ENCODE measurements at regions of chr13 and their contacts with region 1.

Region 1: DNA sequence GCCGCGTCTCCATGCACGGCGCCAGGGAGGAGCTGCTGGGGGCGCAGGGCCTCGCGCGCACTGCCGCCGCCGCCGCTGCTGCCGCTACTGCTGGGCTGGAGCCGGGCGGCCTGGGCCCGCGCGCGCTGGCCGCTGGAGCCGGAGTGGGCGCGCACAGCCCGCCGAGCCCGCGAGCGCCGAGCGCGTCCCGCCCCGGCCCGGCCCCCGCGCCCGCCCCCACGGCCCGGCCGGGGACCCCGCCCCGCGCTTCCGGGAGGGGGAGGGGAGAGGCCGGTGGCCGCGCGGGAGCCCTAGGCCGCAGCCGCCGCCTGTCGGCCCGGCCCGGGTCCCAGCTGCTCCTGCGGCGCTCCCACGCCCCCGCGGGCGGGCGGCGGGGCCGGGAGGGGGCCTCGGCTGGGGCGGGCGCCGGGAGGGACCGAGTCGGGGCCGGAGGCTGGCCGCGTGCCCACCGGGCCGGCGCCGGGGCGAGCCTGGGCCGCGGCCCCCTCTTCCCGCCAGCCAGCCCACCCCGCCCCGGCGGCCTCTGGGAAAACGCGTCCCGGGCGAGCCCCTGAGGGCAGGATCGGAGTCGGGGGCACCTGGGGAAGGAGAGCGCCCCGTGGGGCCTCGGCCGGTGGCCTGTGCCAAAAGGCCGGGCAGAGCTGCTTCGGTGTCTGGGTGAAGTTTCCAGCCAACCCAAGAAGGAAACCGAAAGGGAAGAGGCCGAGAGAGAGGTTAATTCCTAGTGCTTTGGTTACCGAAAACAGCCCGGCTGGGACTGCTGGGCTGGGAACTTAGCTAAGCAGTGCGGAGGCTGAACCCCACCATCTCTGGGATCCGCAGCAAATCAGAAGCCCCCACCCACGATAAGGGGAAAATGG is at the start of gene STK24:
- DNase-seq: peak; percentile 82
- ATAC-seq: peak; percentile 78
- H3K4me3 Mint-ChIP-seq: peak within 1 kb of the TSS; percentile 88
- H3K27ac Mint-ChIP-seq: peak within 1 kb of the TSS; percentile 91
- H3K4me1 Mint-ChIP-seq: peaks cover 45% of the 10 kb centered on the region
- H3K27me3 Mint-ChIP-seq: no peaks in the 10 kb centered on the region
- CTCF ChIP-seq: no peak
- total RNA-seq, gene STK24: 74.8 and 84.8 TPM in 2 replicates

Region 2: DNA sequence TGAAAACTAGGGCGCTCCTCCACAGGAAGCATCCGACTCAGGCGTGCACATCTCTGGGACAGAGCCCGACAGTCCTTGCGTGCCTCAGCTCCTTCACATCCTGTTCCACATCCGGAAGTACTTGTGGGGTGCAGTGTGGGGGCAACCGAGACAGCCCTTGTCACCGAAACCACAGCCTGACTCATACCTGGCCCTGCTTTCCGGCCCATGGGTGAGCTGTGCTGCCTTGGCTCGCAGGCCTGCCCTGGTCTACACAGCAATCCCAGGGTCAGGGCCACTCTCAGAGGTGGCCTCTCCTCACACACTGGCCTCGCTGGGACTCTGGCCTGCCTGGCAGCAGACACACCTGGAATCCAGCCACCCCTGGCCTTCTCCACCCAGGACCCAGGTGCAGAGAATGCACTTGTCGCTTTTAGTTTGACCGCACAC is 100.6 kb before region 1 on chr13:
- CTCF ChIA-PET with region 1: no interaction called
- POLR2A ChIA-PET with region 1: interaction called, 22 read pairs
- intact Hi-C with region 1: loop called (anchors 1 kb)
- DNase-seq: peak; percentile 60
- ATAC-seq: peak; percentile 92
- H3K4me3 Mint-ChIP-seq: peak overlapping the region; percentile 76
- H3K27ac Mint-ChIP-seq: peak overlapping the region; percentile 94
- H3K4me1 Mint-ChIP-seq: peaks cover 50% of the 10 kb centered on the region
- H3K27me3 Mint-ChIP-seq: no peaks in the 10 kb centered on the region
- CTCF ChIP-seq: no peak

Region 3: DNA sequence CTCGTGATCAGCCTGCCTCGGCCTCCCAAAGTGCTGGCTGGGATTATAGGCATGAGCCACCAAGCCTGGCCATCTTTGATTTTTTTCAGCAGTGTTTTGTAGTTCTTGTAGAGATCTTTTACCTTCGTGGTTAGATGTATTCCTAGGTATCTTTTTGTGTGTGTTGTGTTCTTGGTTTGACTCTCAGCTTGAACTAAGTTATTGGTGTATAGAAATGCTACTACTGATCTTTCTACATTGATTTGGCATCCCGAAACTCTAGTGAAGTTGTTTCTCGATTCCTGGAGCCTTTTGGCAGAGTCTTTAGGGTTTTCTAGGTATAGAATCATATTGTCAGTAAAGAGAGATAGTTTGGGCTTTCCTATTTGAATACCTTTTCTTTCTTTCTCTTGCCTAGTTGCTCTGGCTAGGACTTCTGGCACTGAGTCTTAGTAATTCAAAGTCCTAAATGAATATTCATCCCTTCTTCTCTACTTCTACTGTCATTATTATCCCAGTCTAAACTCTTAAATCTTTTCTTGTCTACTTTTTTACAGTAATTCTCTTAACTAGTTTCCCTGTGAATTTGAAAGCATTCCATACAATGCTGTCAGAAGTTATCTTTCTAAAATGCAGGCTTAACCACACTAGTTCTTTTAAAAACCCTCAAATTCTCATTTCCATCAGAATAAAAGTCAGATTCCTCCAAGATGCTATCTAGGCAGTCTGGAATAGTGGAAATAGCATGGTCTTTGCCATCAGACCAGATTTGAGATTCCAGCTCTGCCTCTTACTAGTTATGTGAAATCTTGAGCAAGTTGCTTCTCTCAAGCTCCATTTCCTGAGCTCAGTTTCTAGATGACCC is 674.0 kb after region 1 on chr13:
- CTCF ChIA-PET with region 1: no interaction called
- POLR2A ChIA-PET with region 1: no interaction called
- intact Hi-C with region 1: no loop called
- DNase-seq: no peak
- ATAC-seq: no peak
- H3K4me3 Mint-ChIP-seq: no peak overlapping the region
- H3K27ac Mint-ChIP-seq: peak overlapping the region; percentile 22
- H3K4me1 Mint-ChIP-seq: peaks cover 49% of the 10 kb centered on the region
- H3K27me3 Mint-ChIP-seq: no peaks in the 10 kb centered on the region
- CTCF ChIP-seq: no peak

Region 4: DNA sequence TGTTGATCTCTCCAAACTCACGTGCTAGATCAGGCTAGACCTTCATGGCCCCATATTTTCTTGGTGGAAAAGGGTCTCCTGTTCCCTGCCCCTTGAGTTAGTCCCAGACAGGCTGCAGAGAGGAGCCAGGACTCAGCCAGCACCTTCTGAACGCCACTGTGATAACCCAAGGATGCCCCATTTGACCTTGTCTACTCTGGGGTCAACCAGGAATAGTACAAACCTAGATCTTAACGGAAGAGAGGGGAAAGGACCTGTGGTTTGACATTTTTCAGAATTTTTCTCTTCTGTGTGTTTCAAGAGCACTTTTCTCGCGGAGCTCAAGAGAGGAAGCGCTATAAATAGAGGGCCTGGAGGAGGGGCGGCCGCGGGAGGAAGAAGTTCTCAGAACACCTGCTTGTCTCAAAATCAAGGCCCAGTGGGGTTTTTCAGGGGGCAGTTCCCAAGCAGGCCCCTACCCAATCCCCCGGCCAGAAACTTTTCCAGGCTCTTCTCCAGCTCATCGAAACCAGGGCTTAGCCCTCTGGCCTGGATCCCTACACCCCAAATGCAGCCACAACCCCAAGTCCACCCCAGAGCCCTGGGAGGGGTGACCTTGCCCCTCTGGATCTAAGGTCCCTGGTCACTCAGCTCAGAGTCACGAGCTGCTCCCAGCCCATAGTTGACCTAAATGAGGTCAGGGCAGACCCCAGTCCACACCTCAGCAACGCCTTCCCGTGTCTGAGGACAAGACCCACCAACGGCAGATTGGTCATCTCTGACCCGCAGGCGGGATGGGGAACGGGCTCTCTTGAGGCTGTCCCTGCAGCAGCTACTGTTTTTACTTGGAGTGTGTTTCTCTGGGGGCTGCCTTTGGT is 848.5 kb after region 1 on chr13:
- CTCF ChIA-PET with region 1: no interaction called
- POLR2A ChIA-PET with region 1: no interaction called
- intact Hi-C with region 1: loop called (anchors 10 kb)
- DNase-seq: peak; percentile 56
- ATAC-seq: peak; percentile 53
- H3K4me3 Mint-ChIP-seq: peak overlapping the region; percentile 71
- H3K27ac Mint-ChIP-seq: peak overlapping the region; percentile 93
- H3K4me1 Mint-ChIP-seq: peaks cover 89% of the 10 kb centered on the region
- H3K27me3 Mint-ChIP-seq: no peaks in the 10 kb centered on the region
- CTCF ChIP-seq: no peak